ENCODE measurements at regions of chr3 and their contacts with region 1.

Region 1: DNA sequence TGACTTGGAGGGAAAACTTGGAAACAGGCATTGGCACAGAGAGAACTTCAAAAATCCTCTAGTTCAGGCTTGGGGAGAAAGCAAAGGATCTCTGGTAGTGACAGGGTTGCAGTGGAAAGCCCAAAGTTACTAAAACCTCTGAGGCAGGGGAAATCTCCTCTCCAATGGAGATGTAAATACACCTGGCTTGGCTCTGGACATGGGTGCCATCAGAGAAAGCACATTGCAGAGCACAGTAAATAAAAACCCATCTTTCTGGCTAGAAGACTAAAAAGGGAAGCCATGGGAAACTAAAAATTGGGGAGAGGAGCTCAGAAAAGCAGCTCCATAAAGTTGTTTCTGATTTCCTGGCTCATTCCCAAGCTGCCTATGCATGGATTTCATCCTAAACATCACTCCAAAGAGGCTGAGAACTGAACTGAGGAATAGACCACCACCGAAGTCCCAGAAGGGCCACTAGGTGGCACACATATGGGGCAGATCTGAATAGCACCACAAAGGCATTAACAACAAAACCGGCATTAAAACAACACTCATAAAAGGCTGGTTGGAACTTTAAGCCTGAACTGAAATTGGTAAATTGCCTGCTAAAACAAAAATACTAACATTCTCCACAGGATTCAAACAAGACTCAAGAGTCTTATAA is 106.4 kb downstream of the PLD1 start:
- DNase-seq: peak; percentile 76
- ATAC-seq: peak; percentile 96
- H3K4me3 ChIP-seq: no peak overlapping the region
- H3K27ac ChIP-seq: no peak overlapping the region
- H3K4me1 ChIP-seq: no peaks in the 10 kb centered on the region
- H3K27me3 ChIP-seq: no peaks in the 10 kb centered on the region
- CTCF ChIP-seq: peak; percentile 89

Region 2: DNA sequence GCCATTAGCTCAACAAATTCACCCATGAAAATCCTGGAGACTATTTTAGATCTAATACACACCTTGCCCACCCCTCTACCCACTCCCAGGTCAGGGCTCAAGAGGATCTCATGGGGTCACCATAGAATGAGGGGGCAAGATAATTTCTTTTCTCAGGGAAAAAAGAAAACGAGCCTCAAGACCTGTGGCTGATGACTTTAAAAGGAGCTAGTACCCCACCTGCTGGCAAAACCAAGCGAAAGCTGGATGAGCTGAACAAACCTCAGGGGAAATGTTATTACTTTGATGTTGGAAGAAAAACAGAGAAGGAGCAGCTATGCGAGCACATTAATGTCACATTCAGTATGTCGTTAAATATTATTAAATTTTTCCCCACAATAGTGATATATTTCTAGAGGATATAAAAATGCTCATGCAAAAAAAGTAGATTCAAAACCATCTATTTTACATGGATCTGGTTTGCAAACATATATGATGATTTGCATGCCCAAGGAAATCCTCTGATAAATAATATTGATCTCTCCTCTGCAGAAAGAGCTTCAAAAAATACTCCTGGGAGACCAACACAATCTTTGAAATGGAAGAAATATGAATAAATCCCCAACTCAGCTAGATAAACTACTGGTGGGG is 68.7 kb after region 1 on chr3:
- CTCF ChIA-PET with region 1: interaction called, 3 read pairs
- POLR2A ChIA-PET with region 1: no interaction called
- intact Hi-C with region 1: loop called (anchors 1 kb)
- DNase-seq: peak; percentile 74
- ATAC-seq: peak; percentile 45
- H3K4me3 ChIP-seq: no peak overlapping the region
- H3K27ac ChIP-seq: no peak overlapping the region
- H3K4me1 ChIP-seq: peaks cover 20% of the 10 kb centered on the region
- H3K27me3 ChIP-seq: no peaks in the 10 kb centered on the region
- CTCF ChIP-seq: peak; percentile 91

Region 3: DNA sequence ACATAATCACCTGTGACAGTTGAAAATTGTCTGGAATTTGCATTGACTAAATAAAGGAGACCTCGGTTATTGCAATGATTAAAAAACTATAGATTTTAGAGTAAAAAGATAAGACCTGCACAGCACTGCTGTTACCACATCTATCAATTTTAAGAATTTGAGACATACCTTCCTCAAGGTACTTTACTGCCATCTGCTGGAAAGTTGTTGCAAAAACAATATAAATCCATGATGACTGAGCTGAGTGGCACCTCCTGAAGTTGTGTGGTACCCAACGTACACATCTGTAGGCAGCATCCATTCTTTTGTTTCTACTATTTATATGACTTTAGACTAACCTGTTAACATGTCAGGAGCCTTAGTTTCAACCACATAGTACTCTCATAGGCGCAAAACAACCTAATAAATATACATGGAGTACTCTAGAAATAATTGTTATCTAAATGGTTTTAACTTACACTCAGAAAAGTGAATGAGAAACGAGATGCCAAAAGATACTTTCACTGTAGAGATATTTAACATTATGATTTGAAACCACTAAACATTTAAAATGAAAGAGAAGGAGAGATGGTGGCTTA is 637.7 kb after region 1 on chr3:
- CTCF ChIA-PET with region 1: no interaction called
- POLR2A ChIA-PET with region 1: no interaction called
- intact Hi-C with region 1: loop called (anchors 10 kb)
- DNase-seq: peak; percentile 89
- ATAC-seq: peak; percentile 84
- H3K4me3 ChIP-seq: no peak overlapping the region
- H3K27ac ChIP-seq: no peak overlapping the region
- H3K4me1 ChIP-seq: no peaks in the 10 kb centered on the region
- H3K27me3 ChIP-seq: no peaks in the 10 kb centered on the region
- CTCF ChIP-seq: peak; percentile 84

Measured in PC-3 (cell line).